ENCODE measurements at regions of chr1 and their contacts with region 1.

Region 1: DNA sequence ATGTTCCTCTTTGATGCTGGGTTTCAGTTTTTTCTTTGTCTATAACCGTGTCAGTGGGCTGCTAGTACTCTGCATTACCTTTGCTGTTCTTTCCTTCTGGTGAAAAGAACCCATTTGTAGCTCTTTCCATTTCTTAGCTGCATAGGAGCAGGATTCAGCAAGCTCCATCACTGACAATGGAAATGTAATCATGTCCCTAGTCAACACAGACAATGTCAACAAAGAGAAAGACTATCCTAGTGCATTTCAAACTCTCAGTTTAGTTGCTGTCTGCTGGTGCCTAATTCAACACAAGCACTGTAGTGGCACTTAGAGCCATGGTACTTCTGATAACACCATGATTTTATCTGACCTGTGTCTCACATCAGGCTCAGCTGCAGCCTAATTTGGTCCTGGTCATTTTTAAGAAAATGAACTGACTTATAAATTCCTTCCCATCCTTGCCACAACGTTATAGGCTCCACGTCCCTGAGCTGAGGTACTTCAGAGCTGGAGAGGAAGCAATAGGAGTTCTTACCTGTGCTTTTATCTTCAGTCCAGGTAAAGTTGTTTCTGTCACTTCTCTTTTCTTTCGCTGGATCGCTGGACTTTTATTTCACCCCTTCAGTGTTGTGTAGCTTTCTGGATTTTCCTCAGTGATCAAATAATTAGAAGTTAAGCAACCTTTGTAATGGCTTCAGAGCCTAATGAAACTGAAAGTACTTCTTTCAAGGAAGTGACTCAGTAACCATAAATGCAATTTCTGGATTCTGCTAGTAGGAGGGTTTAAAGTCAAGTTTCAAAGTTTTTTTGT is at the start of gene GBP3:
- DNase-seq: peak in 4 of 5 donors; percentile 39 to 56 (median 45)
- H3K4me3 ChIP-seq: peak within 1 kb of the TSS; percentile 49 to 87
- H3K4me3 Mint-ChIP-seq: peak within 1 kb of the TSS; percentile 90 to 100 (median 95)
- H3K27ac ChIP-seq: peak within 1 kb of the TSS; percentile 73
- H3K27ac Mint-ChIP-seq: peak within 1 kb of the TSS; percentile 84 to 99 (median 94)
- H3K4me1 ChIP-seq: peaks cover 39% of the 10 kb centered on the region
- H3K4me1 Mint-ChIP-seq: peaks cover 29 to 69% (median 45%) of the 10 kb centered on the region in 4 donors
- H3K27me3 ChIP-seq: no peaks in the 10 kb centered on the region
- H3K27me3 Mint-ChIP-seq: no peaks in the 10 kb centered on the region
- total RNA-seq, gene GBP3: 51.8 to 54.1 TPM

Region 2: DNA sequence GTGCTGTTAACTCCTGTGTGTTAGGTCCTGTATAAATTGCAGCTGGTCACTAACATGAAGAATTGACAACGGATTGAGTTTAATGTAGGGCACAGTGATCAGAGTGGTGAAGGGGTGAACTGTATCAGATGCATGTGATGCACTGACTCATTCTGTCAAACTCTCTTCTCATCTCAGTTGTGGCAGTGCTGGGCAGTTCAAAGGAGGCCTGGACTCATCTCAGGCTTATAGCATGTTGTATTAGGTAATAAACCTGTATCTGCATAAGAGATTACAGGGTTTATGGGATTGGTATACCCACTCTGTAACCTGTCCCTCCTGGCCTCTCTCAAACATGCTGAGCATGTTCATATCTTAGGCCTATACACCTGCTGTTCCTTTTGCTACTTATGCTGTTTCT is 12.7 kb after region 1 on chr1:
- CTCF ChIA-PET with region 1: interaction called, 3 read pairs
- POLR2A ChIA-PET with region 1: interaction called, 35 read pairs
- intact Hi-C with region 1: loop called (anchors 2 kb)
- DNase-seq: no peak
- H3K4me3 ChIP-seq: no peak overlapping the region
- H3K4me3 Mint-ChIP-seq: peak overlapping the region in 2 of 8 donors; percentile 57 to 83
- H3K27ac ChIP-seq: no peak overlapping the region
- H3K27ac Mint-ChIP-seq: peak overlapping the region in 5 of 7 donors; percentile 15 to 83 (median 77)
- H3K4me1 ChIP-seq: peaks cover 34% of the 10 kb centered on the region
- H3K4me1 Mint-ChIP-seq: peaks cover 46 to 79% (median 62%) of the 10 kb centered on the region in 4 donors
- H3K27me3 ChIP-seq: no peaks in the 10 kb centered on the region
- H3K27me3 Mint-ChIP-seq: no peaks in the 10 kb centered on the region

Region 3: DNA sequence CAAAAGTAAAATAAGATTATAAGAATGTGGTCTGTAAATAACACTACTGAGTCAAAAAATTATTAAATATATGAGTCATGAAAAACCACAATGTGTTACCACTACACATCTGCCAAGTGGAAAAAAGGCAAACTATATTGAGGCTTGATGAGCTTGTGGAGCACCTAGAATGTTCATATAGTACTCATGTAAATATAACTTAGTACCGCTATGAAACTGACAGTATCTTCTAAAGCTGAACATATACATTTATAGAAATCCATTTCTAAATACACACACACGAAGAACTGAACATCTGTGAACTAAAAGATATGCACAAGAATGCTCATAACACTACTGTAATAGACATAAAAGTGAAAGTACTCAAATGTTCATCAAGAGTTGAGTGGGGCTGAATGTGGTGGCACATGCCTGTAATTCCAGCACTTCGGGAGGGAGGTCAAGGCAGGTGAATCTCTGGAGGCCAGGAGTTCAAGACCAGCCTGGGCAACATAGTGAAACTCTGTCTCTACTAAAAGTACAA is 18.8 kb after region 1 on chr1:
- CTCF ChIA-PET with region 1: interaction called, 12 read pairs
- POLR2A ChIA-PET with region 1: interaction called, 8 read pairs
- intact Hi-C with region 1: loop called (anchors 2 kb)
- DNase-seq: no peak
- H3K4me3 ChIP-seq: no peak overlapping the region
- H3K4me3 Mint-ChIP-seq: peak overlapping the region in 3 of 8 donors; percentile 0 to 62 (median 25)
- H3K27ac ChIP-seq: no peak overlapping the region
- H3K27ac Mint-ChIP-seq: peak overlapping the region in 1 of 7 donors; percentile 58
- H3K4me1 ChIP-seq: peaks cover 23% of the 10 kb centered on the region
- H3K4me1 Mint-ChIP-seq: peaks cover 25 to 40% (median 28%) of the 10 kb centered on the region in 4 donors
- H3K27me3 ChIP-seq: no peaks in the 10 kb centered on the region
- H3K27me3 Mint-ChIP-seq: no peaks in the 10 kb centered on the region

Region 4: DNA sequence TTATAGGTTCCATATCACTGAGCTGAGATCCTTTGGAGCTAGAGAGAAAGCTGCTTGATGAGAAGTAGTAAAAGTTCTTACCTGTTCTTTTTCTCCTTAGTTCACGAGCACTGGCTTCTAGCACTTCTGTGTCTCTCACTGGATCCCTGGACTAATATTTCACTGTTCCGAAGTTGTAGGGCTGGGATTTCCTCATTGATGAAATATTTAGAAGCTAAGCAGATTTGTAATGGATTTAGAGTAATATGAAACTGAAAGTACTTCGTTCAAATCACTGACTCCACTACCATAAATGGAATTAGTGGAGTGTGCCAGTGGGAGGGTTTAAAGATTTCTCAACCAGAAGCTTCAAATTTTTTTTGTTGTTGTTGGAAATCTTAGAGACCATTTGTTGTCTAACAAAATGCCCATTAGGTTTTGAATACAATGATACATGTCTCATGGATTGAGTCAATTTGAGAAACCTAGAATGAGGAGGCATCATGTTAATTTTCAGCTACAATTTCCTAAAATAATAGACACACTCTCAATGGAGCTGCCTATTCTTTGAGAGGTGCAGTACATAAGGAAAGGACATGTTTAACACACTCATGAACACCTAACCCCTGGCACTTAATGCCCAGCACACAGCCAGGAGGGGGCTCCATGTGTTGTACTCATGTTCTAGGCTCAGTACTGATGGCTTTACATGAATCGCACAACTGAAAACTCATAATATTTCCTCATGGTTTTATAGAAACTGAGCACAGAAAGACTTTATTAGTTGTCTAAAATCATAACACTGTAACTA is 42.9 kb after region 1 on chr1 and contains the start of gene GBP1:
- CTCF ChIA-PET with region 1: interaction called, 14 read pairs
- POLR2A ChIA-PET with region 1: interaction called, 60 read pairs
- intact Hi-C with region 1: loop called (anchors 1 kb)
- DNase-seq: peak; percentile 51 to 57 (median 53)
- H3K4me3 ChIP-seq: peak within 1 kb of the TSS; percentile 65 to 74
- H3K4me3 Mint-ChIP-seq: peak within 1 kb of the TSS; percentile 90 to 100 (median 98)
- H3K27ac ChIP-seq: peak within 1 kb of the TSS; percentile 85
- H3K27ac Mint-ChIP-seq: peak within 1 kb of the TSS; percentile 94 to 100 (median 96)
- H3K4me1 ChIP-seq: peaks cover 56% of the 10 kb centered on the region
- H3K4me1 Mint-ChIP-seq: peaks cover 37 to 70% (median 51%) of the 10 kb centered on the region in 4 donors
- H3K27me3 ChIP-seq: no peaks in the 10 kb centered on the region
- H3K27me3 Mint-ChIP-seq: no peaks in the 10 kb centered on the region
- total RNA-seq, gene GBP1: 74.1 to 74.2 TPM

Measured in CD4-positive, alpha-beta memory T cell (primary cell).